ENCODE measurements at regions of chr14 and their contacts with region 1.

Region 1: GRCh38 chr14:50804181-50804721 is 26.7 kb downstream of the NIN start:
- DNase-seq: no peak
- ATAC-seq: no peak; the same call in 1 of the 2 replicates
- H3K4me3 ChIP-seq: no peak overlapping the region
- H3K27ac ChIP-seq: no peak overlapping the region
- H3K4me1 ChIP-seq: peaks cover 31% of the 10 kb centered on the region
- H3K27me3 ChIP-seq: no peaks in the 10 kb centered on the region
- CTCF ChIP-seq: no peak

Region 2: DNA sequence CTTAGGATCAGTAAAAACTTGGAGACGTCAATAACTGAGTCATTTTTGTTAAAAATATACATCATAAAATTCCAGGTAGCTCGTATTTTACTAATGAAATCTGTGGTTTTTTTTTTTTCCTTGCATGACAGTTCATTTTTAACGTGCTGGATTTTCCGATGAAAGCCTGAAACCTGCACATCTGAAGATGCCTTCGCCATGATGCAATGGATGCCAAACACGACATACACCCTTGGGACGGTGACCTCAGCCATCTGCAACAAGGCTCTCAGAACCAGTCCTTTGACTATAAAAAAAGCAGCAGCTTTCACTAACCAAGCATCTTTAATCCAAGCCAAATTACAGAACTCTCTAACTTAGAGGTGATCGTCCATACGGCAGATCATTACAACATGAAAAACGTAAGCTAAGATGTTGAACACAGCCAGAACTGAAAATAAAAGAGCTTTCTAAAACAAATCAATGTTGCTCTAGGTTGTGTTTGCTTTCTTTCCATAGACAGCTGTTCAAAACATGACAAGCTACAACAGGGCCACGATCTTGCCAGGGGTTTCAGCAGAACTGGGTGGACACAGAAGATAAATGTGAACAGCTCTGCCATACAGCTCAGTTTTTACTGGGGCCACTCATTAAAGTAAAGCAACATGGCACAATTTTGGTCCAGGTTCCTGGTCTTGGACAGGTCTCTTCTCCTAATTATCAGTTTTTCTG is 19.0 kb after region 1 on chr14:
- CTCF ChIA-PET with region 1: interaction called, 3 read pairs
- POLR2A ChIA-PET with region 1: interaction called, 3 read pairs
- intact Hi-C with region 1: loop called (anchors 2 kb)
- DNase-seq: peak; percentile 25
- ATAC-seq: peak; percentile 18
- H3K4me3 ChIP-seq: no peak overlapping the region
- H3K27ac ChIP-seq: peak overlapping the region; percentile 58
- H3K4me1 ChIP-seq: peaks cover 20% of the 10 kb centered on the region
- H3K27me3 ChIP-seq: no peaks in the 10 kb centered on the region
- CTCF ChIP-seq: no peak

Region 3: DNA sequence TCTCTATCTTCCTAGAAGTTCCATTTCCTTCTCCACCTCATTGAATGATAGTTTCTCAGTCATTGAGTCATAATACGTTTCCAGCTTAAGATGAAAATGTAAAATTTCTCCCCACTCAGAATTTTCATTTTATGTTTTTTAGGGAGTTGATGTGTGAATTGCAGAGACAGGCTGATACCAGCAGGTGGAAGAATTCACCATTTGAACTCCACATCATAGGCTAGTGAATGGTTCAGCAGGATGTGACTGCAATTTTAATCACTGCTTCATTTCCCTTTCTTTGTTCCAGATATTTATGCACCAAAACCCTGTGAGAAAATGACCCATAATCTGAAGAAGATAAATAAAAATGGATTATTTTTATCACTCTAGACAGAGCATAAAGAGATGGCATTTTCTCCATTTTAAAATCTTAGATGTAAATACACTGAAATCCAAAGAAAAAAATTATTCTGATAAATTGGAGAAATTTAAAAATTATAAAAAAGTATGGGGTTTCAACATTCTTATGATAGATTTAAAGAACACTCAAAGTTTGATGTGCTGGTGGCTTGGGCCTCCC is 150.6 kb after region 1 on chr14:
- CTCF ChIA-PET with region 1: no interaction called
- POLR2A ChIA-PET with region 1: no interaction called
- intact Hi-C with region 1: no loop called
- DNase-seq: peak; percentile 82
- ATAC-seq: peak; percentile 69
- H3K4me3 ChIP-seq: peak overlapping the region; percentile 20; the same call in 1 of the 2 replicates
- H3K27ac ChIP-seq: peak overlapping the region; percentile 89
- H3K4me1 ChIP-seq: peaks cover 19% of the 10 kb centered on the region
- H3K27me3 ChIP-seq: no peaks in the 10 kb centered on the region
- CTCF ChIP-seq: peak; percentile 91

Region 4: GRCh38 chr14:51094901-51095853 is 290.9 kb after region 1 on chr14 and contains the start of gene TRIM9:
- CTCF ChIA-PET with region 1: no interaction called
- POLR2A ChIA-PET with region 1: no interaction called
- intact Hi-C with region 1: no loop called
- DNase-seq: peak; percentile 99
- ATAC-seq: peak; percentile 97
- H3K4me3 ChIP-seq: peak within 1 kb of the TSS; percentile 66
- H3K27ac ChIP-seq: peak within 1 kb of the TSS; percentile 45
- H3K4me1 ChIP-seq: peaks cover 12% of the 10 kb centered on the region; the same call in 1 of the 2 replicates
- H3K27me3 ChIP-seq: no peaks in the 10 kb centered on the region
- CTCF ChIP-seq: no peak
- total RNA-seq, gene TRIM9: 2.5 and 2.6 TPM in 2 replicates

Region 5: DNA sequence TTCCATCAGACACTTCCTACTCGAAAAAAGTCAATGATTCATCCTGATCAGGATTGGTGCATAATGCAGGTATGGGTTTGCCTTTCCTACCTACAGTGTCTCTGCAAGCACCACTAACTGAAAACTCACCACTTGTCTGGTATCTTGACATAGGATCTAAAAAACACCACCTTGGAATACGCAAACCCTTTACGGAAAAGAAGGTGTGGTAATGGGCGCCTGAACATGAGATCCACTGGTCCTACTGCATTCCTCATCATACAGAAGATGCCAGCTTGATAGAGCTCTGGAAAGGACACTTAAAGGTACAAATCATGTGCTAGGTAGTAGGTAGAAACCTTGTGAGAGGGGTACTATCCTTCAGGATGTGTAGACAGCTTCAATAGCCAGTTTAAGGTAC is 391.0 kb after region 1 on chr14:
- CTCF ChIA-PET with region 1: no interaction called
- POLR2A ChIA-PET with region 1: interaction called, 13 read pairs
- intact Hi-C with region 1: no loop called
- DNase-seq: no peak
- ATAC-seq: no peak
- H3K4me3 ChIP-seq: no peak overlapping the region
- H3K27ac ChIP-seq: no peak overlapping the region
- H3K4me1 ChIP-seq: peaks cover 2% of the 10 kb centered on the region
- H3K27me3 ChIP-seq: no peaks in the 10 kb centered on the region
- CTCF ChIP-seq: no peak